Endothelial cell of umbilical vein (primary cell): ENCODE measurements at regions of chr9 and their contacts with region 1.

Region 1: DNA sequence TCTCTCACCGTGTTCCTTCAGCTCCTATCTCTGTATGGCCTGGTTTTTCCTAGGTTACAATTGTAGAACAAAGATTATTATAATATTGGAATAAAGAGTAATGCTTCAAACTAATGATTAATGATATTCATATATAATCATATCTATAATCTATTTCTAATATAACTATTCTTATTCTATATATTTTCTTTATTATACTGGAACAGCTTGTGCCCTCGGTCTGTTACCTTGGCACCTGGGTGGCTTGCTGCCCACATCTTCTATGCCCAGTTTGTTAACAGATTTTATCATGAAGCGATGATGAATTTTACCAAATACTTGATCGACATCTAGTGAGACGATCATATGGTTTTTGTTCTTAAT is 363.6 kb upstream of the TYRP1 start:
- DNase-seq: no peak
- H3K4me3 ChIP-seq: no peak overlapping the region
- H3K27ac ChIP-seq: no peak overlapping the region
- H3K4me1 ChIP-seq: no peaks in the 10 kb centered on the region
- H3K27me3 ChIP-seq: no peaks in the 10 kb centered on the region
- CTCF ChIP-seq: no peak
- POLR2A ChIP-seq: no peak

Region 2: DNA sequence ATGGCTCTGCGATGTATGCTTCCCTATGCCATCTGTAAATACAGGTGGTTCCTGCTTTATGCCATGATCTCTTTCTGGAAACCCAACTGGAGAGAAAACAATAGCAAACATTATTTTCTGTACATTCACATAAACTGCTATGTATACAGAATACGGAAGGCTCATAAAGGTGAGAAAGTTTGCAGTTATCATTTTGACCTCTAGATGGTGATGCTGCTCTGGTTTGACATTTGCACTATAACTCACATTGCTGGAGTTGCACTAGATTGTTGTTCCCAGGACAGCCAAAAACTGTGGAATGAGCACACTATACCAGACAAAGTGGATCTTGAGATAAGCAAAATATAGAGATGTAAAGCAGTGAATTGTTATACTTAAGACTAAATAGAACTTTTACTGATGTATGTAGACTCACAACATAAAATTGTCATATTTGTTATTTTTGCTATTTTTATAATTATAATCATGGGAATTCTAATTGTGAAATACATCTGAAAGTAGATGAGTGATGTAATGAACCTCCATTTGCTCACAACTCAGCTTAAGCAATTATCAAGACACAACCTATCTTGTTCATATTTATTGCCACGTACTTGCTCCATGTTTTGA is 1963.3 kb before region 1 on chr9:
- CTCF ChIA-PET with region 1: interaction called, 39 read pairs
- POLR2A ChIA-PET with region 1: no interaction called
- dilution Hi-C with region 1: no loop called
- intact Hi-C with region 1: loop called (anchors 1 kb)
- DNase-seq: peak; percentile 57
- H3K4me3 ChIP-seq: no peak overlapping the region
- H3K27ac ChIP-seq: no peak overlapping the region
- H3K4me1 ChIP-seq: no peaks in the 10 kb centered on the region
- H3K27me3 ChIP-seq: no peaks in the 10 kb centered on the region
- CTCF ChIP-seq: peak; percentile 55 to 60
- POLR2A ChIP-seq: no peak

Region 3: GRCh38 chr9:12290166-12290869 is 39.3 kb before region 1 on chr9:
- CTCF ChIA-PET with region 1: no interaction called
- POLR2A ChIA-PET with region 1: no interaction called
- dilution Hi-C with region 1: no loop called
- intact Hi-C with region 1: no loop called
- DNase-seq: no peak
- H3K4me3 ChIP-seq: no peak overlapping the region
- H3K27ac ChIP-seq: no peak overlapping the region
- H3K4me1 ChIP-seq: no peaks in the 10 kb centered on the region
- H3K27me3 ChIP-seq: no peaks in the 10 kb centered on the region
- CTCF ChIP-seq: no peak
- POLR2A ChIP-seq: no peak

Region 4: DNA sequence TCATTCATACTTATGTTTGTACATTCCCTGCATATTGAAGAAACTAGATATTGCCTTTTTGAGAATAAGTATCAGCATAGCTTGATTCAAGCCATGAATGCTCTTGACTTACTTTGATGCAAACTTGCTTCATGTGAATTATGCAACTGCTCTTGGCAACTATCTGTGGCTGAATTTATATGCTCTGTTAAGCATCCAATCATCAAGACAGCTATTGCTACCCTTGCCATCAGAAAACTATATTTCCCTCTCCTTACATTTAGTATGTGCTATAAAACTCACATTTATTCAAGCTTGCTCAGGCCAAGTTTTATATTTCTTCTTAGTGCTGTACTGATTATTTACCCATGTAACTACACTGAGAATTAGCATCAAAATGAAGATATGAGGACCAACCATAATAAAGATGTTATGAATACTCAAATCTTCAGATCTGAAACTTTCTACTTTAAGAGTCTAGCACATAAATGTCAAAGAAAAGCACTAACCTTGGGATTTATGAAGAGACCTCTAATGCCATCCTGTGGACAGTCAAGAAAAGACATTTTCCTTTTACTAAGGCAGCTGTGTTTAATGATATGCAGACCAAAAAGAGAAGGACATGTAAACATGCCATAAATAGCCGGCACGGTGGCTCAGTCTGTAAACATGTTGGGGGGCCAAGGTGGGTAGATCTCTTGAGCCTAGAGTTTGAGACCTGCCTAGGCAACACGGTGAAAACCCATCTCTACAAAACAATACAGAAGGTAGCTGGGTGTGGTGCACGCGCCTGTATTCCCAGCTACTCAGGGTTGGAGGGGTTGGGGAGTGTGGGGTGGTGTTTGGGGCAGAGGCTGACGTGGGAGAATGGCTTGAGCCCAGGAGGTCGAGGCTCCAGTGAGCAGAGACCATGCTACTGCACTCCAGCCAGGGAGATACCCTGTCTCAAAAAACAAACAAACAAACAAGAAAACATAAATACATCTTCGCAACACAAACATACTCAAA is 96.6 kb after region 1 on chr9:
- CTCF ChIA-PET with region 1: interaction called, 28 read pairs
- POLR2A ChIA-PET with region 1: no interaction called
- dilution Hi-C with region 1: no loop called
- intact Hi-C with region 1: loop called (anchors 1 kb)
- DNase-seq: peak; percentile 64
- H3K4me3 ChIP-seq: no peak overlapping the region
- H3K27ac ChIP-seq: no peak overlapping the region
- H3K4me1 ChIP-seq: peaks cover 27% of the 10 kb centered on the region
- H3K27me3 ChIP-seq: no peaks in the 10 kb centered on the region
- CTCF ChIP-seq: peak; percentile 21 to 22
- POLR2A ChIP-seq: no peak

Region 5: GRCh38 chr9:12439267-12439666 is 109.7 kb after region 1 on chr9:
- CTCF ChIA-PET with region 1: no interaction called
- POLR2A ChIA-PET with region 1: no interaction called
- dilution Hi-C with region 1: no loop called
- intact Hi-C with region 1: no loop called
- DNase-seq: no peak
- H3K4me3 ChIP-seq: no peak overlapping the region
- H3K27ac ChIP-seq: no peak overlapping the region
- H3K4me1 ChIP-seq: no peaks in the 10 kb centered on the region
- H3K27me3 ChIP-seq: no peaks in the 10 kb centered on the region
- CTCF ChIP-seq: no peak
- POLR2A ChIP-seq: no peak

Region 6: DNA sequence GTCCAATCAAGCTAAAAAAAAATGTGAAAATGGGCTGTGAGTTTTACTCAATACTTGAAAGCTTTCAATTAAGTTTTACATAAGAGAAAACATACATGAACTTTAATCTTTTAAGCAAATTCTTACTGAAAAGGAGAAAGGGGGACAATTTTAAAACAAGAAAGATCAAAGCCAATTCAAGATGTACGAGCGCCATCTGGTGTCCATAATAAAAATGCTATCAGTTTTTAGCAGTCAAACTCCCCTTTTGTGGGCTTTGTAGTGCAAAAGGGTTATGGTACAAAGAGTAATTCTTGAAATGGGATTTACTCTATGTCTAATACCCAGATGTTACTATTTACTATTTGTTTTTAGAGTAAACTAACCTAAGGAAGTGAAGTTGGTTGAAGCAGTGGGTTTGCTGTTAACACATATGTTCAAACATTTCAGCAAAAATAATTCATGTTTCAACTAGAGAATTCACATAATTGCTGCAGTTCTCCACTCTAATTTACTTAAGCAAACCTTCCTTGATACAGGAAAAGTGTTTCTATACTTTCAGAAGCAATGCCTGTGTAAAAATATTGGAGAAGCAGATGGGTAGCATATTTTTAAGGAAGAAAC is 135.4 kb after region 1 on chr9:
- CTCF ChIA-PET with region 1: interaction called, 7 read pairs
- POLR2A ChIA-PET with region 1: no interaction called
- dilution Hi-C with region 1: no loop called
- intact Hi-C with region 1: loop called (anchors 1 kb)
- DNase-seq: peak; percentile 42
- H3K4me3 ChIP-seq: no peak overlapping the region
- H3K27ac ChIP-seq: no peak overlapping the region
- H3K4me1 ChIP-seq: no peaks in the 10 kb centered on the region
- H3K27me3 ChIP-seq: peaks cover 0 to 3% of the 10 kb centered on the region in 2 experiments
- CTCF ChIP-seq: peak; percentile 33 to 41
- POLR2A ChIP-seq: no peak